ENCODE measurements at regions of chr7 and their contacts with region 1.

Region 1: DNA sequence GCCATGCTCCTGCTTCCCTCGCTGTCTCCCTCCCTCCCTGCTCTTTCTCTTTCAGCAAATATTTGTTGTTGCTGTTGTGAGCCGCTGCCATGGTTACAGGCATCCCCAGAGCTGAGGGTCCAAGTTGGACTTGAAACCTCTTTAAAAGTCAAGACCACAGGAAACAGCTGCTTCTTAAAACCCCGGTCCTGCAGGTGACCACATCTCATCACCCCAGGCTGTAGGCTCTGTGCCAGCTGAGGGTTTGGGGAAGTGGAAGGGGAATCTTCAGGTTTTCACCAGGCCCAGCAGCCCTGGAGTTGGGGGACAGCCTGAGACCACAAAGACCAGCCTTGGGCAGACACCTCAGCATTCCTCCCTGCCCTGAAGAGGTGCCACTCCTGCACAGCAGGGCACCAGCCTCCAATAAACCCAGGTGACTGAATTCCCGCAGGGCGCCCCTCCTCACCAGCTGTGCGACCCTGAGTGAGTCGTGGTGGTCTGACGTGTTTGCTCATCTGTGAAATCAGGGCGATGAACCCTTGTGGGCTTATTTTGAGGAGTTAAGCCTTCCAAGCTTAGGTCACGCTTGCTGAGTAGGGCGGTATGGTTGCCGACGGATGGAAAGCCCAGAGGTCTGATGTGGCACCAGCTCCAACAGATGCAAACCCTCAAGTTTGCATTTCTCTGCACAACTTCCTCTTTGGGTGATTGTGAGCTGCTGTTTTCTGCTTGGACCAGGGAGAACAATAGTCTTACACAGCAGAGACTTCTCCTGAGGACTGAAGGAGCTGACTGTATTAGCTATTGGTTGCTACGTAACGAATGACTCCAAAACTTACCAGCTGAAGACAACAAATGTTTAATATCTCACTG is 24.8 kb downstream of the NPTX2 start:
- DNase-seq: peak; percentile 96
- H3K4me3 ChIP-seq: peak overlapping the region; percentile 60
- H3K27ac ChIP-seq: peak overlapping the region; percentile 99
- H3K4me1 ChIP-seq: peaks cover 65% of the 10 kb centered on the region
- CTCF ChIP-seq: no peak

Region 2: DNA sequence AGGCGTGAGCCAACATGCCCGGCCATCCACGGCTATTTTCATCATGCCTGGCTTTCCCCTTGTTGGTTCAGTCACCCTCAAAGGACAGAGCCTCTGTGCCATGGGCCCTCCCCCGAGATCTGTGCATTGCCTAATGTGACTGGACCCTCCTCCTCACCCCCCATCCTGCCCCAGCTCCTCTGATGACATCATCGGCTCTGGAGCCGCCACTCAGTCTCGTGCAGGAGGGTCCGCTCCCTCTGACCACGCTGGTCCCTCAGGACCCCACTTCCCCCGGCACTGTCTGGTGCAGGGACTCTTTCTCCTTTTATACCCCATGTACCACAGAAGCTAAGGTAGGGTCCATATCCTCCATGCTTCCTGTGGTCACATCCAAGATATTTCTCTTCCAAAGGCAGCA is 207.8 kb before region 1 on chr7:
- CTCF ChIA-PET with region 1: no interaction called
- POLR2A ChIA-PET with region 1: no interaction called
- intact Hi-C with region 1: loop called (anchors 10 kb)
- DNase-seq: no peak
- H3K4me3 ChIP-seq: no peak overlapping the region
- H3K27ac ChIP-seq: no peak overlapping the region
- H3K4me1 ChIP-seq: peaks cover 9% of the 10 kb centered on the region
- CTCF ChIP-seq: no peak

Region 3: GRCh38 chr7:98681951-98682350 is 40.1 kb after region 1 on chr7:
- CTCF ChIA-PET with region 1: no interaction called
- POLR2A ChIA-PET with region 1: no interaction called
- intact Hi-C with region 1: loop called (anchors 5 kb)
- DNase-seq: peak; percentile 48
- H3K4me3 ChIP-seq: no peak overlapping the region
- H3K27ac ChIP-seq: peak overlapping the region; percentile 28
- H3K4me1 ChIP-seq: peaks cover 18% of the 10 kb centered on the region
- CTCF ChIP-seq: no peak

Region 4: DNA sequence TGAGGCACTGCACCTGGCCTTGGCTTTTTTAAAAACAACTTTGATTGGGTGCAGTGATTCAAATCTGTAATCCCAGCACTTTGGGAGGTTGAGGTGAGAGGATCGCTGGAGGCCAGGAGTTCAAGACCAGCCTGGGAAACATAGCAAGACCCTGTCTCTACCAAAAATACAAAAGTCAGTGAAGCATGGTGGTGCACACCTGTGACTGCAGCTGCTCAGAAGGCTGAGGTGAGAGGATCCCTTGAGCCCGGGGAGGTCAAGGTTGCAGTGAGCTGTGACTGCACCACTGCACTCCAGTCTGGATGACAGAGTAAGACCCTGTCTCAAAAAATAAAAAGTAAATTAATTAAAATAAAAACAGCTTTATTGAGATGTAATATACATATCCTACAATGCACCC is 60.1 kb after region 1 on chr7:
- CTCF ChIA-PET with region 1: interaction called, 5 read pairs
- POLR2A ChIA-PET with region 1: interaction called, 4 read pairs
- intact Hi-C with region 1: loop called (anchors 1 kb)
- DNase-seq: peak; percentile 91
- H3K4me3 ChIP-seq: no peak overlapping the region
- H3K27ac ChIP-seq: peak overlapping the region; percentile 79
- H3K4me1 ChIP-seq: peaks cover 61% of the 10 kb centered on the region
- CTCF ChIP-seq: no peak

Region 5: DNA sequence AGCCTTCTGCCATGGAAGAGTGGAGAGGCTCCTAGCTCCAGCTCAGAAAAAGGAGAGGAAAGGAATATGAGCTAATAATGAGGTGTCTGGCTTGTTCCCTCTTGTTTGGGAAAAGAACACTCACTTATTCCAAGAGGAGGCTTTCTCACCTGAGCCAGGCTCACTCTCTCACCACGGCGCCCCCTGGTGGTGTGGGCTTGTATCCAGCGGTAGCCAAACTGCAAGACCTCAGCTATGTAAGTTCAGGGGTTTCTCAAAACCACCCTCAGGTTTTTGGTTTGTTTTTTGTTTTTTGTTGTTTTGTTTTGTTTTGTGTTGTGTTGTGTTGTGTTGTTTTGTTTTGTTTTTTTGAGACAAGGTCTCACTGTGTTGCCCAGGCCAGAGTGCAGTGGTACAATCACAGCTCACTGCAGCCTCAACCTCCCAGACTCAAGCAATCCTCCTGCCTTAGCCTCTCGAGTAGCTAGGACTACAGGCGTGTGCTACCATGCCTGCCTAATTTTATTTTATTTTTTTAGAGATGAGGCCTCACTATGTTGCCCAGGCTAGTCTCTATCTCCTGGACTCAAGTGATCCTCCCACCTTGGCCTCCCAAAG is 103.9 kb after region 1 on chr7:
- CTCF ChIA-PET with region 1: no interaction called
- POLR2A ChIA-PET with region 1: no interaction called
- intact Hi-C with region 1: loop called (anchors 5 kb)
- DNase-seq: peak; percentile 81
- H3K4me3 ChIP-seq: no peak overlapping the region
- H3K27ac ChIP-seq: no peak overlapping the region
- H3K4me1 ChIP-seq: no peaks in the 10 kb centered on the region
- CTCF ChIP-seq: peak; percentile 95

Region 6: GRCh38 chr7:98878365-98879165 is 236.7 kb after region 1 on chr7 and contains the start of gene TRRAP:
- CTCF ChIA-PET with region 1: no interaction called
- POLR2A ChIA-PET with region 1: no interaction called
- intact Hi-C with region 1: loop called (anchors 1 kb)
- DNase-seq: peak; percentile 85
- H3K4me3 ChIP-seq: peak within 1 kb of the TSS; percentile 97
- H3K27ac ChIP-seq: peak within 1 kb of the TSS; percentile 94
- H3K4me1 ChIP-seq: peaks cover 30% of the 10 kb centered on the region
- CTCF ChIP-seq: peak; percentile 79; the same call in 1 of the 2 replicates
- total RNA-seq, gene TRRAP: 43.4 and 50.4 TPM in 2 replicates

Measured in OCI-LY7 (cell line).